GM18951 (cell line): ENCODE measurements at regions of chr6 and their contacts with region 1.

Region 1: DNA sequence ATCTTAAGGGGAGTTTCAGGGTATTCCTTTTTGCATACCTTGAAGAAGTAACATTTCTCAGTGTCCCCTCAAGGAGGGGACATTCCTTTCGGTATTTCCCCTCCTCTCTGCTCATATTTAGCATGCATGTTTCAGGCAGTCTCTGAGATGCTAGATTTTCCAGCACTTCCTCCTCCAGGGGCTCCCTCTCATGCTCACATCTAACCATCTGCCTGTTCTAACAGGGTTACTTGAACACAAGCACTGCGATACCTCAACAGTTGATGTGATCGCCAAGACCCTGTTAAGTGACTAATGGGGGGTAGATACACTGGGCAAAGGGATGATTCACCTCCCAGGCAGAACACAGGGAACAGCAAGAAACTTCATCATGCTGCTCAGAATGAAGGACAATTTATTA is 12.9 kb upstream of the MCM3 start:
- POLR2A ChIP-seq: no peak

Region 2: DNA sequence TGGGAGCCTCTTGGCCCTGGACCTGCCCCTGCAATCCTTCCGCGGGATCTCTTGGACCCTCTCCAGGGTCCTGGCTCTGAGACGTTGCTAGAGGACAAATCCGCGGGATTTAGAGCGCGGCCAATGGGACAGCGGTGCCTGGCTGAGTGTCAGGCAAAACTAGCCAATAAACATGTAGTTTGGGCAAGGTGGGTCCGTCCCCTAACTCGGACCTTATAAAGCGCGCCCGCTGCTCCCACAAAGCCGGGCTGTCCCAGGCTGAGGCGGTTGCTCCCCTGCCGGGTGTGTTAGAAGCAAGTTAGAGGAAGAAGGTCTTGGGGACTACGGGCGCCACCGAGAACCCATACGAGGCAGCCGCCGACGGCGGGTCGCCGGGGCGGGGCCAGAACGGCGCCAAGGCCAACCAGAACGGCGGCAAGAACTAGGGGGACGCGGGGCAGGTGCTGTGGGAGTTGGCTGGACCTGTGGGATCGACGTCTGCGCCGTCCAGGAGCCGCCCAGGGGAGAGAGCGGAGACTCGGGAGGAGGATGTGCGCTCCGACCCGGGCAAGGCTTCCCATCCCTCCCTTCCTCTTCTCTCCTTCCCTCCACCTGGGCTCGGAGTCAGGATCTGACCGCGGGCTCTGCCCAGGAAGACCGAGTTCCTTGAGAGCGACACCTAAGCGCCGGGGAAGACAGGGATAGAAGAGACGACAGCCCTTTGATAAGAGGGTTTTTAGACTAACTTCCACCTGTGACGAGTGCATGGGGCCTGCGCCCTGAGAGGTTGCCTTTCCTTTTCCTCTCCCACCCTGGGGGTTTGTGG is 367.0 kb after region 1 on chr6:
- in situ Hi-C with region 1: loop called (anchors 10 kb)
- POLR2A ChIP-seq: peak; percentile 97

Region 3: GRCh38 chr6:52925919-52926770 is 628.7 kb after region 1 on chr6:
- in situ Hi-C with region 1: no loop called
- POLR2A ChIP-seq: no peak